ENCODE measurements at regions of chr7 and their contacts with region 1.

Region 1: GRCh38 chr7:107133396-107133795 is 35.4 kb upstream of the HBP1 start:
- DNase-seq: no peak
- ATAC-seq: no peak
- H3K4me3 ChIP-seq: no peak overlapping the region
- H3K27ac ChIP-seq: no peak overlapping the region
- H3K4me1 ChIP-seq: peaks cover under 1% of the 10 kb centered on the region
- H3K27me3 ChIP-seq: no peaks in the 10 kb centered on the region
- CTCF ChIP-seq: no peak
- POLR2A ChIP-seq: no peak
- RAD21 ChIP-seq: no peak

Region 2: GRCh38 chr7:107113866-107114265 is 19.5 kb before region 1 on chr7:
- CTCF ChIA-PET with region 1: interaction called, 3 read pairs
- POLR2A ChIA-PET with region 1: no interaction called
- dilution Hi-C with region 1: no loop called
- in situ Hi-C with region 1: no loop called
- intact Hi-C with region 1: loop called (anchors 1 kb)
- DNase-seq: no peak
- ATAC-seq: no peak
- H3K4me3 ChIP-seq: no peak overlapping the region
- H3K27ac ChIP-seq: no peak overlapping the region
- H3K4me1 ChIP-seq: peaks cover 5% of the 10 kb centered on the region
- H3K27me3 ChIP-seq: no peaks in the 10 kb centered on the region
- CTCF ChIP-seq: no peak
- POLR2A ChIP-seq: no peak
- RAD21 ChIP-seq: no peak

Region 3: DNA sequence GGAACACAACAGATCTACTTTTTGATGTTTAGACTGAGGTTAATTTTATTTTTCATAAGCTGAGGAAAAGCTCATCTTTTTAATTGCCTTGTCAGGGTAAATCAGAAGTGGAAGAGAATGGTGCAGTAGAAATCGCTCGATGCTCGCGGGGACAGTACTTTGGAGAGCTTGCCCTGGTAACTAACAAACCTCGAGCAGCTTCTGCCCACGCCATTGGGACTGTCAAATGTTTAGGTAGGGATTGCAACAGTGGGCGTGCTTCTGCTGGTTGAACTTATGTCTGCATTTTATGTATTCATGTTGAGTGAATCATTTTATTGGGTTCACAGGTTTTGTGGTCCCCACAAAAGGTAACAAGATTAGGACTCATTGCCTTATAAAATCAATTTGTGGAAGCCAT is 23.7 kb after region 1 on chr7:
- CTCF ChIA-PET with region 1: no interaction called
- POLR2A ChIA-PET with region 1: no interaction called
- dilution Hi-C with region 1: no loop called
- in situ Hi-C with region 1: no loop called
- intact Hi-C with region 1: no loop called
- DNase-seq: no peak
- ATAC-seq: no peak
- H3K4me3 ChIP-seq: no peak overlapping the region
- H3K27ac ChIP-seq: no peak overlapping the region
- H3K4me1 ChIP-seq: peaks cover 1% of the 10 kb centered on the region
- H3K27me3 ChIP-seq: no peaks in the 10 kb centered on the region
- CTCF ChIP-seq: no peak
- POLR2A ChIP-seq: no peak
- RAD21 ChIP-seq: no peak

Region 4: GRCh38 chr7:107622429-107622828 is 489.0 kb after region 1 on chr7:
- CTCF ChIA-PET with region 1: no interaction called
- POLR2A ChIA-PET with region 1: no interaction called
- dilution Hi-C with region 1: no loop called
- in situ Hi-C with region 1: no loop called
- intact Hi-C with region 1: no loop called
- DNase-seq: peak; percentile 81
- ATAC-seq: peak; percentile 56
- H3K4me3 ChIP-seq: no peak overlapping the region
- H3K27ac ChIP-seq: no peak overlapping the region
- H3K4me1 ChIP-seq: peaks cover 2% of the 10 kb centered on the region; the same call in 1 of the 2 replicates
- H3K27me3 ChIP-seq: no peaks in the 10 kb centered on the region
- CTCF ChIP-seq: no peak
- POLR2A ChIP-seq: no peak
- RAD21 ChIP-seq: no peak